PC-9 (cell line): ENCODE measurements at regions of chr2 and their contacts with region 1.

Region 1: GRCh38 chr2:160337728-160338127 is 137.7 kb upstream of the ITGB6 start:
- DNase-seq: peak; percentile 35 to 46
- H3K4me3 ChIP-seq: no peak overlapping the region
- H3K27ac ChIP-seq: no peak overlapping the region
- H3K4me1 ChIP-seq: peaks cover 33% of the 10 kb centered on the region
- H3K27me3 ChIP-seq: no peaks in the 10 kb centered on the region
- CTCF ChIP-seq: no peak

Region 2: GRCh38 chr2:160499865-160500264 is 162.1 kb after region 1 on chr2:
- CTCF ChIA-PET with region 1: no interaction called
- POLR2A ChIA-PET with region 1: no interaction called
- intact Hi-C with region 1: no loop called
- DNase-seq: no peak
- H3K4me3 ChIP-seq: no peak overlapping the region
- H3K27ac ChIP-seq: no peak overlapping the region
- H3K4me1 ChIP-seq: 0 out of 2 replicates have a peak, but pooled peaks cover 5% of the 10 kb centered on the region
- H3K27me3 ChIP-seq: no peaks in the 10 kb centered on the region
- CTCF ChIP-seq: no peak

Region 3: GRCh38 chr2:160613466-160614153 is 275.9 kb after region 1 on chr2:
- CTCF ChIA-PET with region 1: no interaction called
- POLR2A ChIA-PET with region 1: interaction called, 24 read pairs
- intact Hi-C with region 1: no loop called
- DNase-seq: no peak
- H3K4me3 ChIP-seq: no peak overlapping the region
- H3K27ac ChIP-seq: no peak overlapping the region
- H3K4me1 ChIP-seq: no peaks in the 10 kb centered on the region
- H3K27me3 ChIP-seq: no peaks in the 10 kb centered on the region
- CTCF ChIP-seq: no peak